MCF 10A (cell line): ENCODE measurements at regions of chr14 and their contacts with region 1.

Region 1: DNA sequence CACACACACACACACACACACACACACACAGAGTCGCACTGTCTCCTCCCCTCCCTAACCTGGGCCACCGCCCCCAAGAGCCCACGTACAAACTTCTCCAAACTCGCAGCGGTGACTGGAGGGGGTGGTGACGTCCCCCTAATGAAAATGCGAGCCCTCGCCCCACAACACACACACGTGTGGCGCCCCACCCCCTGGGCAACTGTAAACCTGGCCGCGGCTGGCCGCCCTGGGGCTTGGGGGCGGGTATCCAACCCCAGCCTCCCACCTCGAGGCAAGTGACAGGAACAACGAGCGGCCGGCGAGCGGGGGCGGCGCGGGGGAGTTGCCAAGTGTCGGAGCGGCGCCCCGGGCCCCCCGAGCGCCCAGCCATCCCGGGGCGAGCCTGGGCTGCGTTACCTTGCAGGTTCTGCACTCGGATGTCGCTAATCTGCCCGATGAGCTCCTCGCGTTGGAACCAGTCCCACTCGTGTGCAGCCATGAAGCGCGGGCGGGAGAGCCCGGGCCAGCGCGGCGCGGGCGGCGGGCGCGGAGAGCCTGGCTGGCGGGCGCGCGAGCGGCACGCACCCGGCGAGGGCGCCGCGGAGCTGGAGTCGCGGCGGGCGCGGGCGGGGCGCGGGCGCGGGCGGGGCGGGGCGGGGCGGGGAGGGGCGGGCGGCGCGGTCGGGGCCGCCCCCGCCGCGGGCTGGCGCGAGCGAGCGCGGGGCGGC is at the start of gene CLMN:
- DNase-seq: peak; percentile 34
- H3K4me3 Mint-ChIP-seq: peak within 1 kb of the TSS; percentile 84
- H3K27ac Mint-ChIP-seq: peak within 1 kb of the TSS; percentile 35
- H3K4me1 Mint-ChIP-seq: peaks cover 63% of the 10 kb centered on the region
- H3K27me3 Mint-ChIP-seq: no peaks in the 10 kb centered on the region
- CTCF ChIP-seq: no peak
- total RNA-seq, gene CLMN: 15.7 and 17.9 TPM in 2 replicates

Region 2: DNA sequence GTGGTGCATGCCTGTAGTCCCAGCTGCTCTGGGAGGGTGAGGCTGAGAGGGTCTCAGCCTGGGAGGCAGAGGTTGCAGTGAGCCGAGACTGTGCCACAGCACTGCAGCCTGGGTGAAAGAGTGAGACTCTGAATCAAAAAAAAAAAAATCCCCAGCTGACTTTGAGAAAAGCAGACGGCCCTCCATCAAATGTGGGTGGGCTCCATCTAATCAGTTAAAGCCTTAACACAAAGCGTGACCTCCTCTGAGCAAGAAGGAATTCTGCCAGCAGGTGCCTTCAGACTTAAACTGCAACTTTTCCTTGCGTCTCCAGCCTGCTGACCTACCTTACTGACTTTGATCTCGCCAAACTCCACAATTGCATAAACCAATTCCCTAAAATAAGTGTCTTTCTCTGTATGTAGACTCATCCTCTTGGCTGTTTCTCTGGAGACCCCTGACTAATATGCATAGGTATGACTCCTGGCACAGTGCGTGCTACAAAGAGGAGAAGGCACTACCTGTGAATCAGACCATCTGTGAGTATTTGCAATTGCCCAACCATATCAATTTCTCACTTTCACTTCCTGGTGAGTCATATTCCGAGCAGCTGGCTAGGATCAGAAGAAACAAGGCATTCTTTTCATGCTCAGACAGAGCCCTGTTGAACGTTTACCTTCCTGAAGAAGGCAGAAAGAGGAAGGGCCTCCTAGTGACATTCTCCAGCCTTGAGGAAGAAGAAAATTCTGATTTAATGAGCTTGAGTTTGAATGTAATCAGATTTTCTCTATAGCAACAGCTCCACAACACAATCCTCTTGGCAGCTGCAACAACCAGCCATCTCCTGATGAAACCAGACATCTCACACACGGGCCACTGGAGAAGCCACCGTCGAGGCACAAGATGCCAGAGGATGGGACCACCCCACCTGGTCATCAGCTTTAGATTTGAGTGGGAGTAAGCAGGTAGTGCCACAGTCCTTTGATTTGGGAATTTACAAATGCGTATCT is 54.1 kb before region 1 on chr14:
- CTCF ChIA-PET with region 1: interaction called, 3 read pairs
- POLR2A ChIA-PET with region 1: interaction called, 26 read pairs
- intact Hi-C with region 1: loop called (anchors 2 kb)
- DNase-seq: peak; percentile 99
- H3K4me3 Mint-ChIP-seq: peak overlapping the region; percentile 57
- H3K27ac Mint-ChIP-seq: peak overlapping the region; percentile 90
- H3K4me1 Mint-ChIP-seq: peaks cover 13% of the 10 kb centered on the region
- H3K27me3 Mint-ChIP-seq: no peaks in the 10 kb centered on the region
- CTCF ChIP-seq: no peak

Region 3: DNA sequence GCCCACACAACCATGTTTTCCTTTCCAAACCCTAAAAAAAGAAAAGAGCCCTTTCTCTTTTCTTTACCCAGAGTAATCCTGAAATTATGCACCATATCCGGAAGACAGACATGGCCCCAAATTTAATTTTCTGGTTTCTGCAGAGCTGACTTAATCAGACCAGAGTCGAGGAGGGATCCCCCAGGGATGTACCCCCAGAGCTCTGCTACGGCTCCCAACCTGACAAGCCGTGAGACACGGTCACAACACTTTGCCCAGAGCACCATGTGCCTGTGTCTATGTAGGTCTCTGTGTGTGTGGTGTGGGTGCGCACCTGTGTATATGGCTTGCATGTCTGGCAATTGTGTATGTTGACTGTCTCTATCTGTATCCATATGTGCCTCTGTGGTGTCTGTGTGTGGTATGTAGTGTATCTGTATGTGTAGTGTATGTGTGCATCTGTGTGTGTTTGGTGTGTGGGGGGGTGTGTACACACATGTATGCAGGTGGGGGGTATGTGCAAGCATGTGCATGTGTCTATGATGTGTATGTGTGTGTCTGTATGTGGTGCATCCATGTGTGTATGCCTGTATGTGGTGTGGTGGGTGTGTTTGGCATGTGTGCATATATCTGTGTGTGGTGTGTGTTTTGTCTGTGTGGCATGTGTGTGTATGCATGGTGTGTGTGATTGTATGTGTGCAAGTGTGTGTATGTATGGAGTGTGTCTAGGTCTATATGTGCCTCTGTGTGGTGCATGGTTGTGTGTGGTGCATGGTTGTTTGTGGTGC is 78.0 kb after region 1 on chr14:
- CTCF ChIA-PET with region 1: no interaction called
- POLR2A ChIA-PET with region 1: no interaction called
- intact Hi-C with region 1: no loop called
- DNase-seq: no peak
- H3K4me3 Mint-ChIP-seq: no peak overlapping the region
- H3K27ac Mint-ChIP-seq: no peak overlapping the region
- H3K4me1 Mint-ChIP-seq: no peaks in the 10 kb centered on the region
- H3K27me3 Mint-ChIP-seq: no peaks in the 10 kb centered on the region
- CTCF ChIP-seq: no peak